Mammary epithelial cell (primary cell): ENCODE measurements at regions of chr15 and their contacts with region 1.

Region 1: GRCh38 chr15:94793641-94794040 is 562.3 kb downstream of the MCTP2 start:
- DNase-seq: peak; percentile 41
- H3K4me3 ChIP-seq: no peak overlapping the region
- H3K27ac ChIP-seq: no peak overlapping the region
- H3K4me1 ChIP-seq: peaks cover 27% of the 10 kb centered on the region
- H3K27me3 ChIP-seq: no peaks in the 10 kb centered on the region
- CTCF ChIP-seq: no peak

Region 2: DNA sequence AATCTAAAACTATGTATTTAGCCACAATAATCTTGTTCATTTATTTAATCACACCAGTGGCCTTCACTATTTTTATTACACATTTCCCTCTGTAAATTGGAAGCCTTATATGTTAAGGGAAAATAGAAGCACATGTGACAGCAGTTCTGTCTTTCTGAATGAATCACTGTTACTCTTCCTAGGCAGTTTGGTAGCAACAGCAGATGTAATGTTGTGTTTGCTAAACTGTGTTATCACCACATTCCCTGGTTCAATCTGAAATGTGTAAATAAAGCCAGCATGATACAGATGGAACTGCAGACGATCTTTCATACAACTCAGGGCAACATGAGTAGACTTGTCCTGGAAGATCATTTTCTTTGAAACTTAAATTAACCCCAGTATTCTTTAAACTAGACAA is 342.2 kb before region 1 on chr15:
- CTCF ChIA-PET with region 1: no interaction called
- dilution Hi-C with region 1: no loop called
- in situ Hi-C with region 1: no loop called
- intact Hi-C with region 1: no loop called
- DNase-seq: peak; percentile 60
- H3K4me3 ChIP-seq: no peak overlapping the region
- H3K27ac ChIP-seq: peak overlapping the region; percentile 36
- H3K4me1 ChIP-seq: peaks cover 9% of the 10 kb centered on the region
- H3K27me3 ChIP-seq: no peaks in the 10 kb centered on the region
- CTCF ChIP-seq: no peak

Region 3: GRCh38 chr15:94596707-94597106 is 196.9 kb before region 1 on chr15:
- CTCF ChIA-PET with region 1: no interaction called
- dilution Hi-C with region 1: no loop called
- in situ Hi-C with region 1: no loop called
- intact Hi-C with region 1: no loop called
- DNase-seq: no peak
- H3K4me3 ChIP-seq: no peak overlapping the region
- H3K27ac ChIP-seq: no peak overlapping the region
- H3K4me1 ChIP-seq: no peaks in the 10 kb centered on the region
- H3K27me3 ChIP-seq: no peaks in the 10 kb centered on the region
- CTCF ChIP-seq: no peak

Region 4: DNA sequence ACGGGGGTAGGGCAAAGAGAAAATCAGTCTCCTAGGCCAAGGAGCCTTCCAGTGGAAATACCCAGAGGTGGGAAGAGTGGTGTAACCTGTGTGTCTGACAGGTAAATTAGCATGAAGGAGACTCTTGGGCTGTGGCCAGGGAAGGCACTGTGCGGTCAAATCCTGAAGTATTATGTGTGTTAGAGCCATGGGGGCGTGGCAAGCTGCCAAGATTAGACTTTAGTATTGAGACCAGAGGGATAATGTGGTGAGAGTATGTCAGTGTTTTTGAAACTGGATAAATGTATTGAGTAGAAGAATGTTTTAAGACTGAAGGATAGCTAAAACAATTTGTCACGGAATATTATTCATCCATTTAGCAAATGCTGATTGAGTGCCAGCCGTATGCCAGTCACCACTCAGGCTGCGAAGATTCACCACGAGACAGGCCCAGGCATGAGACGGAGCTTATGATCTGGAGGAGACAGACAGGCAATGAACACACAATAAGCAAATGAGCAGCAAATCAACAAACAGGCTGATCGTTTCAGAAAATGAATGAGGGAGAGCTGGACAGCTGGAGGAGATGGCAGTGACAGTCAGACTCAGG is 116.3 kb before region 1 on chr15:
- CTCF ChIA-PET with region 1: no interaction called
- dilution Hi-C with region 1: no loop called
- in situ Hi-C with region 1: no loop called
- intact Hi-C with region 1: loop called (anchors 1 kb)
- DNase-seq: peak; percentile 96
- H3K4me3 ChIP-seq: peak overlapping the region in 2 of 3 experiments; percentile 21 to 33
- H3K27ac ChIP-seq: peak overlapping the region; percentile 84
- H3K4me1 ChIP-seq: peaks cover 42% of the 10 kb centered on the region
- H3K27me3 ChIP-seq: no peaks in the 10 kb centered on the region
- CTCF ChIP-seq: no peak

Region 5: DNA sequence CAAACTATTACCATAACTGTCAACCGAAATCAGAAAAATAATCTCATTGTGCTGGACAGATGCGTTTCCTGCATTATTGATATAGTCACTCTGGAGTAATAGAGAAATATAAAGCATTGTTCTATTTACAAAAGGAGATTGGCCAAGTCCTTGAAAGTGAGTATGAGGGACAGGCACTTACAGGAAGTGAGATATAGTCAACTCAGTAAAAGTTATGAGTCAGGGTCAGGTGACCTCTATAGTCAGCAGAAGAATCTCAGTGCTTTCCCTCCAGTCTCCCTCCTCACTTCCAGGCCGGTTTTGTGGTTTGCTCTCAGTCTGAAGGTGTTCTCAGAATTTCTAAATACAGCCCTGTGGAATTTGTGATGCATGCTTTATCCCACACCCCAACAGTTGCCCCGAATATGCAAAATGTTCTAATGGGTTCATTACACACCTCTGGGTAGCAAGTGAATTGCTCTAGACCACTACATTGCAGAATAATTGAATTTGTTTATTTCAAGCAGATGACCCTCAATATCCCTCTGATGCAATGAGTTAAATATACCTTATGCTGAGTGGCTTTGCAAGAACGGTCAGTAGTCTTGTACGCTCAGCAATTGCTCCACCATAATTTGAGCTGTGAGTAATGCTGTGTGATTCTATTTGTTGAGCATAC is 225.4 kb after region 1 on chr15:
- CTCF ChIA-PET with region 1: no interaction called
- dilution Hi-C with region 1: no loop called
- in situ Hi-C with region 1: no loop called
- intact Hi-C with region 1: loop called (anchors 5 kb)
- DNase-seq: peak; percentile 90
- H3K4me3 ChIP-seq: no peak overlapping the region
- H3K27ac ChIP-seq: peak overlapping the region; percentile 44
- H3K4me1 ChIP-seq: peaks cover 28% of the 10 kb centered on the region
- H3K27me3 ChIP-seq: no peaks in the 10 kb centered on the region
- CTCF ChIP-seq: no peak